SK-N-SH (cell line): ENCODE measurements at regions of chr18 and their contacts with region 1.

Region 1: DNA sequence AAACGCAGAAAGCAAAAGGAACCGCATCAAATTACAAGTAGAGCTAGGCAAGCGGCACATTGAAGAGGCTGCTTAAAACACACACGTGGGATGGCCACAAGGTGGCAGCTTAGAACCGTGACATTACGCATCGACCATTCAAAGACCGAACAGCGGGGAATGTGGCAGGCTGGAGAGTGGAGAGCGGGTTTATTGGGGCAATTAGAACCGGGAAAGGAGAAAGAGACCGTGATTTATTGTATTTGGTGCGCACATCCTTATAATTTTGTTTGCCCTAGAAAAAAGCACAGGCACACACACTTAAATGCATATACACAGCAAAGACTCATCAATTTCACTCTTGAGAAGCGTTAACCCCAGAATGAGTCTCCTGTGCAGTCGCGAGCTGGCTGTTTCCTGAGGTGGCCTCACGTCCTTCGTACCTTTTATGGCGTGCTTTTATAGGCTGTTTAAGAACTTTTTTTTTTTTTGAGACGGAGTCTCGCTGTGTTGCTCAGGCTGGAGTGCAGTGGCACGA is 31.7 kb upstream of the MEP1B start:
- DNase-seq: peak; percentile 76
- H3K4me3 ChIP-seq: peak overlapping the region in 1 of 2 experiments; percentile 45; a peak in 1 of 4 replicates
- H3K27ac ChIP-seq: no peak overlapping the region
- H3K4me1 ChIP-seq: no peaks in the 10 kb centered on the region; a peak in 1 of 4 replicates
- H3K27me3 ChIP-seq: no peaks in the 10 kb centered on the region
- CTCF ChIP-seq: peak; percentile 84
- EP300 ChIP-seq: no peak
- RAD21 ChIP-seq: peak; percentile 99

Region 2: DNA sequence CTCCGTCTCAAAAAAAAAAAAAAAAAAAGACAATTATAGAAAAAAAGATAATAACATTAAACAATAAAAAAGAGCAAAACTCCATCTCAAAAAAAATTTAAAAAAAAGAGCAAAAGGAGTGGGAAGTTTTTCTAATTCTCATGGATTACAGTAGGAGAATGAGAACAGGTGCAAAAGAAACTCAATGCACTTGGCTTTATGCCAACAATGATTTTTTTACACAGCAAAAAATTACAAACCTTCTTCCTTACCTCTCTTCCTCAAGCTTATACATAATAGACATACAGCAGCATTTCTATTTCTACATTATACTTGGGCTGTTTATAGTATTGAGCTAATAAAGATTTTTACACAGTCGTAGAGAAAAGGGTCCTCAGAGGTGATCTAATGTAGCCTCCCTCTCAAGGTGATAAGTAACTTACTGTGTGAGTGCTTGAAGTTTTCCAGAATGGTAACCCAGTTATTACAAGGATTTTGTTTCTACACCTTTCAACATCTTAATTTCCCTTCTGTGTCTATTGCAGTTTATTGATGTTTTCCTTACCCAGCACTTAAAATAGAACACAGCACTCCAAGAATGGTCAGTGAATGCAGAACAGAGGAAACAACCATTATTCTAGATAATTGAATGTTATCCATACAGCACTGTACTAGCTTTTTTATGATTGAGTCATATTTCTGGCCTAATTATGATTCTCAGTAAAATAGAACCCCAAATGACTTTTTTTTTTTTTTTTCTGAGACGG is 101.4 kb before region 1 on chr18:
- CTCF ChIA-PET with region 1: no interaction called
- POLR2A ChIA-PET with region 1: no interaction called
- DNase-seq: no peak
- H3K4me3 ChIP-seq: no peak overlapping the region
- H3K27ac ChIP-seq: no peak overlapping the region
- H3K4me1 ChIP-seq: no peaks in the 10 kb centered on the region
- H3K27me3 ChIP-seq: no peaks in the 10 kb centered on the region
- CTCF ChIP-seq: no peak
- EP300 ChIP-seq: no peak
- RAD21 ChIP-seq: no peak

Region 3: DNA sequence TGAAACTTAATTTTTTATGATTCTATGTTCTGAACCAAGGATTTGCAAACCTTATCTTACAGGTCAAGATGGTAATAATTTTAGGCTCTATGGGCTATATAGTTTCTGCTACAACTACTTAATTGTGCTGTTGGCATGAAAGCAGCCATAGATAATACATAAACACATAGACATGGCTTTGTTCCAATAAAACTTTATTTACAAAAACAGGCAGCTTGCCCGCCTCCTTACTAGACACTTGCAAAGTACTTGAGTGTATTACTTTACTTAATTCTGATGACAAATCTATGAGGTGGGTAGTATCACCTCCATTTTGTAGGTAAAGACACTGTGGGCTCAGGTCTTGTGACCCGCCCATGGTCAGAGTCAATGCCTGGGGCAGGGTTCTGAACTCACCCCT is 146.2 kb after region 1 on chr18:
- CTCF ChIA-PET with region 1: no interaction called
- POLR2A ChIA-PET with region 1: no interaction called
- DNase-seq: no peak
- H3K4me3 ChIP-seq: no peak overlapping the region
- H3K27ac ChIP-seq: no peak overlapping the region
- H3K4me1 ChIP-seq: peaks cover 13 to 41% of the 10 kb centered on the region in 2 experiments
- H3K27me3 ChIP-seq: no peaks in the 10 kb centered on the region
- CTCF ChIP-seq: no peak
- EP300 ChIP-seq: no peak
- RAD21 ChIP-seq: no peak

Region 4: DNA sequence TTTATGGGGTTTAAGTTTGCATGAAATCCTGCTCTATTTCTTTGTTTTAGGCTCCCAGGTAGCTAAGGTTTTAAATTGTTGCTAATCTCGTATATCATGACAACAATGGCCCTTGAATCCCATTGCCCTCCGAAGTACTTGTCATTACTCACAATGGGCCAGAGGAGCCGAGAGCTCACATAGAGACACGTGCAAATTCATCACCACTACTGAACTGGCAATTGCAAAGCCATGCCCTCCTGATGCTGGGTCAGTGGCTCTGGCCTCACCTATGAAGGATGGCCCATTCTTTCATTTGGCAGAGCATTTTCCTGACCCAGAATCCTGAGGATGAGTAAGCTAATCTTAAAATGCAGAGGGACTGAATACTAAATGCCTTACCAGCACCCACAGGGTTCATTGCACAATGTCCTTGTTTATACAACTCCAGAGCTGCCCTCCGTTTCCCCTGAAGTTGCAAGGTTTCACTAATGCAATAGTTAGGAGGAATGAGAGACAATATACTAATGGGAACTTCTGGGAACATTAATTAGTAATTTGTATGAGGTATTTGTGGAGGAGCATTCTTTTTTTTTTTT is 384.1 kb after region 1 on chr18:
- CTCF ChIA-PET with region 1: interaction called, 182 read pairs
- POLR2A ChIA-PET with region 1: no interaction called
- DNase-seq: no peak
- H3K4me3 ChIP-seq: no peak overlapping the region
- H3K27ac ChIP-seq: no peak overlapping the region
- H3K4me1 ChIP-seq: no peaks in the 10 kb centered on the region; a peak in 1 of 4 replicates
- H3K27me3 ChIP-seq: no peaks in the 10 kb centered on the region
- CTCF ChIP-seq: no peak
- EP300 ChIP-seq: no peak
- RAD21 ChIP-seq: no peak